Activated CD4-positive, alpha-beta T cell treated with anti-CD3 and anti-CD28 coated beads, Interleukin-2, amount 10 ng/mL, durations not matched to agents 24 days and 14 days (primary cell): ENCODE measurements at regions of chr18 and their contacts with region 1.

Region 1: GRCh38 chr18:13585379-13586153 is 140.8 kb downstream of the FAM210A start:
- DNase-seq: no peak
- H3K4me3 Mint-ChIP-seq: no peak overlapping the region
- H3K27ac Mint-ChIP-seq: no peak overlapping the region
- H3K4me1 Mint-ChIP-seq: peaks cover 59% of the 10 kb centered on the region
- H3K27me3 Mint-ChIP-seq: no peaks in the 10 kb centered on the region

Region 2: DNA sequence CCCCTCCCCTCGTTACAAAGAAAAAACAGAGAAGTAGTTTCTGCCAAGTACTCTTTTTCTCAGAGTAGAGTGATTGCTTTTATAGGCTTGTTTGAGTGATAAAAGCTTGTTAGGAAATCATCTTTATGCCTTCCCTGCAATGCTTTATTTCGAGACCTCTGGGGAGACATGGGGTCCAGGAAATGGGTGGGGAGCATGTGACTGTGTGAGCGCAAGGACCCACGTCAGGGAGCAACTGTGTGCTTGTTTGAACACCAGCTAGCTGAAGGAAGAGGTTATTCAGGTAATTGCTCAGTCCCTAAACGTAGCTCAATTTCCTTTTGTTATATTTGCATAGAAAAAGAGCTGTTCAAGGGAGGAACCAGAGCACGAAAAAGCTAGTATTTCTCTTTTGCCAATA is 46.5 kb before region 1 on chr18:
- intact Hi-C with region 1: no loop called
- DNase-seq: peak; percentile 66
- H3K4me3 Mint-ChIP-seq: peak overlapping the region; percentile 49
- H3K27ac Mint-ChIP-seq: peak overlapping the region; percentile 71
- H3K4me1 Mint-ChIP-seq: peaks cover 18% of the 10 kb centered on the region
- H3K27me3 Mint-ChIP-seq: no peaks in the 10 kb centered on the region

Region 3: GRCh38 chr18:13611601-13612195 is 26.1 kb after region 1 on chr18:
- intact Hi-C with region 1: loop called (anchors 1 kb)
- DNase-seq: no peak
- H3K4me3 Mint-ChIP-seq: peak overlapping the region; percentile 94
- H3K27ac Mint-ChIP-seq: peak overlapping the region; percentile 97
- H3K4me1 Mint-ChIP-seq: peaks cover 72% of the 10 kb centered on the region
- H3K27me3 Mint-ChIP-seq: no peaks in the 10 kb centered on the region